Calu3 (cell line): ENCODE measurements at regions of chr18 and their contacts with region 1.

Region 1: GRCh38 chr18:50786864-50787263 is 33.0 kb downstream of the MRO start:
- DNase-seq: no peak
- H3K4me3 Mint-ChIP-seq: no peak overlapping the region
- H3K27ac Mint-ChIP-seq: no peak overlapping the region
- H3K4me1 Mint-ChIP-seq: no peaks in the 10 kb centered on the region
- H3K27me3 Mint-ChIP-seq: peaks cover 22% of the 10 kb centered on the region
- CTCF ChIP-seq: no peak

Region 2: DNA sequence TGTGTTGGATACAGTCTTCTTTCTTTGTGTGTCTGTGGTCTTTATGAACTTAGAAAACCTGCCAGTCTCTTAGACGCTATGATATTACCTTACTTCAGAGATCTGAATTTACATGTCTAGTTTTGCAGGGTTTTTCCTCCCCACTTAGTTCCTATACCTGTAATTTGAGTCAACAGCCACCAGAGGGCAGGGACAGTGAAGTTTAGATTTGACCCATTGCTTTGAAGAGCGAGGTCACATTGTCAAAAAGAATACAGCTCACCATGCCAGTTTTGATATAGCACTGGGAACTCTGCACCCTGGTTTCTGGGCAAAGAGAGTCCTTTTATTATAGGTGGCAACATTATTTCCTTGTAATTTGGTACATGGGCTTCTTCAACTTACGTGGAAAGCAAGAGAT is 124.7 kb before region 1 on chr18:
- CTCF ChIA-PET with region 1: no interaction called
- intact Hi-C with region 1: loop called (anchors 1 kb)
- DNase-seq: no peak
- H3K4me3 Mint-ChIP-seq: no peak overlapping the region
- H3K27ac Mint-ChIP-seq: no peak overlapping the region
- H3K4me1 Mint-ChIP-seq: no peaks in the 10 kb centered on the region
- H3K27me3 Mint-ChIP-seq: peaks cover 90% of the 10 kb centered on the region
- CTCF ChIP-seq: peak; percentile 41

Region 3: DNA sequence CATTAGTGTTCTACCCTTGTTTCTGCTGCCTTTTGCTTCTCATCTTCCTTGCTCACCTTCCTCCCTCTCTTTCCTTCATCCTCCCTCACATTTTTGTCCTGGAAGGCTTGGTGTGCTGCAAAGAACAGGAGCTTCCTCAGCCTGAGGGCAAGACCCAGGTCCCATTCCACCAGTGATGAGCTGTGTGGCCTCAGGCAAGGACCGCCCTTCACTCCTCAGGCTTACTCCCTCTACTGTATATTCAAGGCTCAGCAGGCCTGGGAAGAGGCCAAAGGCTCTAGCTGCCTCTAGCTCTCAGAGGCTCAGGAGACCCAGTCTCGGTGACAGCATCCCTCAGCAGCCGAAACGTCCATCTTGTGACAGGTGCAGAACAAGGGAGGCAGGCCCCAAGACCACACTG is 64.6 kb before region 1 on chr18:
- CTCF ChIA-PET with region 1: no interaction called
- intact Hi-C with region 1: no loop called
- DNase-seq: no peak
- H3K4me3 Mint-ChIP-seq: no peak overlapping the region
- H3K27ac Mint-ChIP-seq: no peak overlapping the region
- H3K4me1 Mint-ChIP-seq: no peaks in the 10 kb centered on the region
- H3K27me3 Mint-ChIP-seq: peaks cover 77% of the 10 kb centered on the region
- CTCF ChIP-seq: no peak

Region 4: GRCh38 chr18:51182824-51183223 is 396.0 kb after region 1 on chr18:
- CTCF ChIA-PET with region 1: no interaction called
- intact Hi-C with region 1: no loop called
- DNase-seq: no peak
- H3K4me3 Mint-ChIP-seq: no peak overlapping the region
- H3K27ac Mint-ChIP-seq: no peak overlapping the region
- H3K4me1 Mint-ChIP-seq: peaks cover 54% of the 10 kb centered on the region
- H3K27me3 Mint-ChIP-seq: no peaks in the 10 kb centered on the region
- CTCF ChIP-seq: no peak